CD8-positive, alpha-beta memory T cell (primary cell): ENCODE measurements at regions of chr2 and their contacts with region 1.

Region 1: GRCh38 chr2:176126929-176127773 is 2.4 kb upstream of the HOXD8 start:
- DNase-seq: peak; percentile 49 to 72 (median 62)
- H3K4me3 ChIP-seq: no peak overlapping the region
- H3K4me3 Mint-ChIP-seq: peak overlapping the region in 1 of 7 donors; percentile 53
- H3K27ac ChIP-seq: no peak overlapping the region
- H3K27ac Mint-ChIP-seq: peak overlapping the region in 2 of 8 donors; percentile 46 to 87
- H3K4me1 ChIP-seq: peaks cover 16% of the 10 kb centered on the region
- H3K4me1 Mint-ChIP-seq: peaks cover 31 to 49% (median 40%) of the 10 kb centered on the region in 3 donors
- H3K27me3 ChIP-seq: peaks cover 83% of the 10 kb centered on the region
- H3K27me3 Mint-ChIP-seq: peaks cover 76 to 79% of the 10 kb centered on the region in 2 donors

Region 2: GRCh38 chr2:175984846-175985245 is 142.3 kb before region 1 on chr2:
- CTCF ChIA-PET with region 1: no interaction called
- POLR2A ChIA-PET with region 1: no interaction called
- DNase-seq: no peak
- H3K4me3 ChIP-seq: no peak overlapping the region
- H3K4me3 Mint-ChIP-seq: no peak overlapping the region
- H3K27ac ChIP-seq: no peak overlapping the region
- H3K27ac Mint-ChIP-seq: no peak overlapping the region
- H3K4me1 ChIP-seq: no peaks in the 10 kb centered on the region
- H3K4me1 Mint-ChIP-seq: no peaks in the 10 kb centered on the region
- H3K27me3 ChIP-seq: no peaks in the 10 kb centered on the region
- H3K27me3 Mint-ChIP-seq: no peaks in the 10 kb centered on the region

Region 3: DNA sequence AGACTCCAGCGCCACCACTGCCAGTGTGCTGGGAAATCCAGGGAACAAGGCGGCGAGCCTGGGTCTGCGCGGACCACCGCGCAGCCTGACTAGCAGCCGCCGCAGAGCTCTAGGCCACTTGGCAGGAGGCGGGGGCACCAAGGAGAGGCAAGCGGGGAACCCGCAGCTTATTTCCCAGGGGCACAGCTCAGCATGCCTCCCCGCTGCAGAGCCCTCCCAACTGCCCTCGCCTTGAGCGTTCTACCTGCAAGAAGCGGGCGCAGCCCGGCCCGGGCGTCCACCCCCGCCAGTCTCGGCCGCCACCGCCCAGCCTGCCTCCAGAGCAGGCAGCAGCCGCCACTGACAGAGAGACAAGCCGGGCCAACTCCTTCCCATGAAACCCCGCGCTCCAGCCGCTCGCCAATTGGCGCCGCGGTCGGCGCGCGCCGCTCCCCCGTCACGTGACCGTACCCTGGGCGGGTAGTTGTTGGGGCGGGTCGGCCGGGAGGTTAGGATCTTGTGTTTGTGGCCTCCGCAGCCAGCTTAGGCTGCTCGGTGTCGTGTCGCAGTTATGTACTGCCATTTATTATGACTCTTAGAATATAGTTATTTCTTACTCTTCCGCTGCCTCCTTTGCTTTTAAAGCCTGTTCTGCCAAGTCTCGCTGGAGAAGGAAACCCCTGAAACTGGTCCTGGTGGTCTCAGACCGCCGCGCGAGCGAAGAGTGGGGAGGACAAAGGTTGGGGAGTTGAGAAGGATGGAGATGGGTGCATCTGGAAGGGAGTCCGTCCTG is 125.0 kb before region 1 on chr2 and contains the start of gene LNPK:
- CTCF ChIA-PET with region 1: no interaction called
- POLR2A ChIA-PET with region 1: no interaction called
- DNase-seq: peak; percentile 85 to 93 (median 90)
- H3K4me3 ChIP-seq: peak within 1 kb of the TSS; percentile 98
- H3K4me3 Mint-ChIP-seq: peak within 1 kb of the TSS; percentile 83 to 96 (median 90)
- H3K27ac ChIP-seq: peak within 1 kb of the TSS; percentile 88
- H3K27ac Mint-ChIP-seq: peak within 1 kb of the TSS; percentile 78 to 98 (median 93)
- H3K4me1 ChIP-seq: peaks cover 16% of the 10 kb centered on the region
- H3K4me1 Mint-ChIP-seq: peaks cover 20 to 35% (median 33%) of the 10 kb centered on the region in 3 donors
- H3K27me3 ChIP-seq: no peaks in the 10 kb centered on the region
- H3K27me3 Mint-ChIP-seq: peaks cover 0 to 4% of the 10 kb centered on the region in 2 donors
- total RNA-seq, gene LNPK: 31.7 to 36.0 TPM

Region 4: DNA sequence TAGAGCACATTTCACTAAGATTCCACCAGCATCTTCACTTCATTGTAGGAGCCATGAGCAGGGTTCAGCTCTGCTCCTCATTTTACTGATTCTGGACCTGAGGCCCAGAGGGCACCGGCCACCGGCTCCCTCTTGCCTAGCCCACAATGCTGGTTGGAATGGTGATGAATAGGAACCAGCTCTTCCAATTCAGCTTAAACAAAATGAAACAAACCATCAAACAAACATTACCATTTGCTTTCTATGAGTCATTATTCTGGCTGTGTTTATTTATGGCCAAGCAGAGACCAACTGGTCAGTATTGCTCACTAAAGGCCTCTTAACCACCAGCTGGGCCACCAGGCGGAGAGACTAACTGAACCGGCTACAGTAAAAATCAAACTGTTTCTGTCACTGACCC is 318.8 kb after region 1 on chr2:
- CTCF ChIA-PET with region 1: interaction called, 12 read pairs
- POLR2A ChIA-PET with region 1: no interaction called
- DNase-seq: no peak
- H3K4me3 ChIP-seq: no peak overlapping the region
- H3K4me3 Mint-ChIP-seq: no peak overlapping the region
- H3K27ac ChIP-seq: no peak overlapping the region
- H3K27ac Mint-ChIP-seq: no peak overlapping the region
- H3K4me1 ChIP-seq: no peaks in the 10 kb centered on the region
- H3K4me1 Mint-ChIP-seq: peaks cover 0 to 14% (median 0%) of the 10 kb centered on the region in 3 donors
- H3K27me3 ChIP-seq: no peaks in the 10 kb centered on the region
- H3K27me3 Mint-ChIP-seq: peaks cover 2 to 12% of the 10 kb centered on the region in 2 donors

Region 5: DNA sequence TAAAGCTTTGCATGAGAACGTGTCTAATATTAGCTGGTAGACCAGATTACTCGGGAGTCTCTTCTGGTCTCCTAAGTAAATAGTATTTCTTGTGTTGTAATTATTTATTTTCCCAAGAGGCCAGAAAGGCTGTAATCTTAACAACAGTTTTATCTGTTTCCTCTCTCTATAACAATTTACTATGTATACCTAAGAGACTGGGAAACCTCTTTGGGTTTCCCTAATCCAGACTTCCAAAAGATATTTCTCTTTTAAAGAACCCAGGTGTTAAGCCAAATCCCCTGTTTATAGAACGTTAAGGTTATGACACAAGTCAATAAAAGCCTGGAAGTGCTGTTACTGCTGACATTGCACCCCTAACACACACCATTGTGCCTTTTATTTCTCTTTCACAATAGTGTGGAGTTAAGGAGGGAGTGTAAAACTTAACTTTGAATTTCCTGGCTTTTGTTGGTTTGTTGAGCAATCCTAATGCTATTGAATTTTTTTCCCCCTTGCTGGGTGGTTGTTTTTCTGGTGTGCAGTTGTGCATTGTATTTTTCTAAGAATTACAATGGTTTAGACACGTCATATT is 334.7 kb after region 1 on chr2:
- CTCF ChIA-PET with region 1: interaction called, 79 read pairs
- POLR2A ChIA-PET with region 1: no interaction called
- DNase-seq: no peak
- H3K4me3 ChIP-seq: no peak overlapping the region
- H3K4me3 Mint-ChIP-seq: no peak overlapping the region
- H3K27ac ChIP-seq: no peak overlapping the region
- H3K27ac Mint-ChIP-seq: no peak overlapping the region
- H3K4me1 ChIP-seq: no peaks in the 10 kb centered on the region
- H3K4me1 Mint-ChIP-seq: no peaks in the 10 kb centered on the region
- H3K27me3 ChIP-seq: peaks cover 9% of the 10 kb centered on the region
- H3K27me3 Mint-ChIP-seq: peaks cover 15 to 79% of the 10 kb centered on the region in 2 donors

Region 6: DNA sequence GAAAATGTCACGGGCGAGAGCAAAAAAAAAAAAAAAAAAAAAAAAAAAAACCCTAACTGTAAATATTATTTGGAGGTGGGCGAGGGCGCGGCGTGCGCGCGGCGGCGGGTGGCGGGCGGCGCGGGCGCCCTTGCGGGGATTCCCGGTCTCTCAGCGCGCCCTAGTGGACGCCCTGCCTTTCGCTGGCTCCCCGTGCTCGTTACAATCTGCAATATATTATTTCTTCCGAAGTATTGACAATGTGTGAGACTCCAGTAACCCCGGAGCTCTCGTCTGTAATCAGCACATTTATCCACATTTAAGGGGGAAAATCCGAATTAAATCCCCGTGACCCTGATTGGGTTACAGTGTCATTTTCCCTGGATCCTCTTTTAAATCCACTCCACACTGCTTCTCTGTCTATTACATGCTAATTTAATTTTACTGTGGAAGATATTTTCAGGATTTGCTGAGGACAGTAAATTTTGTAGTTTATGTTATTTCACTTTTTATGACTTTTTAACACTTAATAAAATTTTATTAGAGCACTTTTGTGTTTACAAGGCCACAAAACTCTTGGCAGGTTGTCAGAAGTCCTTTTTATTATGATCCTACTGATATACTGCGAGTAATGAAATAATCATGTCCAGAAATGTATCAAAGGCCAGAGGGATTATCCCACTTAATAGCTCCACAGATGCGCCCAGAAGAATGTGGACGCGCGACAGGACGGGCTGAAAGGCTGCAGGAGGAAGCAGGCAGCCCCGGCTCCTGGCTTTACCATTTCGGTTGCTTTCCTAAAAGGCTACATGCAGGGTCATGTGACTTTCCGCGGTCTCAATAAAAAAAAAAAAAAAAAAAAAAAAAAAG is 511.2 kb after region 1 on chr2:
- CTCF ChIA-PET with region 1: interaction called, 15 read pairs
- POLR2A ChIA-PET with region 1: no interaction called
- DNase-seq: peak; percentile 37 to 61 (median 39)
- H3K4me3 ChIP-seq: peak overlapping the region; percentile 36
- H3K4me3 Mint-ChIP-seq: peak overlapping the region in 6 of 7 donors; percentile 57 to 87 (median 70)
- H3K27ac ChIP-seq: no peak overlapping the region
- H3K27ac Mint-ChIP-seq: no peak overlapping the region
- H3K4me1 ChIP-seq: peaks cover 4% of the 10 kb centered on the region
- H3K4me1 Mint-ChIP-seq: peaks cover 6 to 9% (median 8%) of the 10 kb centered on the region in 3 donors
- H3K27me3 ChIP-seq: peaks cover 35% of the 10 kb centered on the region
- H3K27me3 Mint-ChIP-seq: peaks cover 34 to 73% of the 10 kb centered on the region in 2 donors

Region 7: DNA sequence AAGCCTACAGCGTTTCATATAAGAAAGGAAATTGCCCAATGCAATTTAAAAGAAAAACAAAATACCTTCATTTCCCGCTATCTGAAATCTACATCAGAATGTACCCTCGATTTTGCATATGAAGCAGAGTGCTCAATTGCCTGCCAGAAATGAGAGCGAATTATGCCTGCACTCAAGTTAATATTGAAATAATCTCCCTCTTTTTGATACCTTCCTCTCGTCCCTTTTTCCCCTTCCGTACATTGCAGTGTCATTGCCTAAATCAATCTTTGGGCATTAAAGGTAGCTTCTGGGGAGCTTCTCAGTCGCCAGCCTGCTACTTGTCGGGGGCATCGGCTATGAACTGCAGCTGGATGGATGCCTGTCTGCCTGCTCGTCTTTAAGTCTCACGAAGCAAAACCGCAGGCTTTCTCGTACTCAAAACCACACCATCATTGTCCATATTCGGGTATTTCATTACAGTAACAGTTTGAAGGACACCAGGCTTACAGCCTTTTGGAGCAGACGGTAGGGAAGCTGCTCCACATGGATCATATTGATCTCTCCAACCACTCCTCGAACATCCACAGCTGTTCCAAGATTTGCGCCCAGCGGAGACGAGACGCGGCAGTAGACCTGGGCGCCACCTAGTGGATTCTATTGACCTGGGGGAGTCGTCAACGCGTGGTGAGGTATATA is 1021.5 kb after region 1 on chr2:
- CTCF ChIA-PET with region 1: interaction called, 29 read pairs
- POLR2A ChIA-PET with region 1: no interaction called
- DNase-seq: peak; percentile 60 to 78 (median 63)
- H3K4me3 ChIP-seq: peak overlapping the region; percentile 71
- H3K4me3 Mint-ChIP-seq: peak overlapping the region; percentile 70 to 92 (median 89)
- H3K27ac ChIP-seq: no peak overlapping the region
- H3K27ac Mint-ChIP-seq: peak overlapping the region in 7 of 8 donors; percentile 14 to 82 (median 67)
- H3K4me1 ChIP-seq: peaks cover 9% of the 10 kb centered on the region
- H3K4me1 Mint-ChIP-seq: peaks cover 9 to 19% (median 18%) of the 10 kb centered on the region in 3 donors
- H3K27me3 ChIP-seq: peaks cover 29% of the 10 kb centered on the region
- H3K27me3 Mint-ChIP-seq: peaks cover 13 to 29% of the 10 kb centered on the region in 2 donors